B cell (primary cell): ENCODE measurements at regions of chr7 and their contacts with region 1.

Region 1: GRCh38 chr7:139016931-139017511 is 18.8 kb downstream of the ZC3HAV1L start:
- DNase-seq: peak; percentile 66
- ATAC-seq: peak; percentile 78
- H3K4me3 ChIP-seq: no peak overlapping the region
- H3K4me3 Mint-ChIP-seq: no peak overlapping the region
- H3K27ac ChIP-seq: no peak overlapping the region
- H3K27ac Mint-ChIP-seq: no peak overlapping the region
- H3K4me1 ChIP-seq: peaks cover 0 to 3% of the 10 kb centered on the region in 2 donors
- H3K4me1 Mint-ChIP-seq: peaks cover 4% of the 10 kb centered on the region
- H3K27me3 ChIP-seq: peaks cover 0 to 2% (median 0%) of the 10 kb centered on the region in 4 experiments
- H3K27me3 Mint-ChIP-seq: peaks cover 20% of the 10 kb centered on the region
- CTCF ChIP-seq: peak; percentile 66

Region 2: GRCh38 chr7:139004321-139005075 is 12.5 kb before region 1 on chr7:
- CTCF ChIA-PET with region 1: no interaction called
- POLR2A ChIA-PET with region 1: no interaction called
- intact Hi-C with region 1: no loop called
- DNase-seq: peak; percentile 33
- ATAC-seq: no peak
- H3K4me3 ChIP-seq: no peak overlapping the region
- H3K4me3 Mint-ChIP-seq: no peak overlapping the region
- H3K27ac ChIP-seq: no peak overlapping the region
- H3K27ac Mint-ChIP-seq: no peak overlapping the region
- H3K4me1 ChIP-seq: no peaks in the 10 kb centered on the region
- H3K4me1 Mint-ChIP-seq: no peaks in the 10 kb centered on the region
- H3K27me3 ChIP-seq: peaks cover 0 to 4% (median 0%) of the 10 kb centered on the region in 4 experiments
- H3K27me3 Mint-ChIP-seq: peaks cover 9% of the 10 kb centered on the region
- CTCF ChIP-seq: no peak

Region 3: DNA sequence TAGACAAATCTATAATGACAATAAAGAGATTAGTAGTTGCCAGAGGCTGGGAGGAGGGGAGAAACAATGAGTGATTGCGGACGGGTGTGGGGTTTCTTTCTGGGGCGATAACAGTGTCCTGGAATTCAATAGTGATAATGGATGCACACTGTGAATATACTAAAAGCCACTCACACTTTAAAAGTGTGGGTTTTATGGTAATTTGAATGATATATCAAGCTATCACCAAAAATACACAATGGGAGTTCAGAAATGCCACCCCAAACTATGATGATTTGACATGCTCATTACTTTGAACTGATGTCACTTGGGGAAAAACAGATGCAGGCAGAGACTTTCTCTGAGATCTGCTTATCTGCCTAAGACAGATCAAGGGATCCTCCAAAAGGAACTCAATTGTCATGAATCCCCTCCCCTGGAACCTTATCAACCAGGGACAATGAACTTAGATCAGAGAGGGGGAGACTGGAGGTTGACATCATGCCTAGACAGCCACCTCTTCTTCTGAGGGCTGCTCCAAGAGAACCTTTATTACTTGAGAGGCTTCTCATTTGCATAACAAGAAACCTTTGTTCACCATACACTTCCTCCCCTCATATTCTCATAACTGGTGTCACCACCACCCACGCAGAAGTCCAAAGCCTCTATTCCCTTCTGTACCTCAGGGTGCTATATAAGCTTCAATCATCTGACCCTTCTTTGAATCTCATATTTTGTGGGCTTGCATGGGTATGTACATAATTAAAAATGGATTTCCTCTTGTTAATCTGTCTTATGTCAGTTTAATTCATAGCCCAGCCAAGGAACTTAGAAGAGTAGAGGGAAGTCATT is 107.3 kb after region 1 on chr7:
- CTCF ChIA-PET with region 1: interaction called, 85 read pairs
- POLR2A ChIA-PET with region 1: interaction called, 3 read pairs
- intact Hi-C with region 1: no loop called
- DNase-seq: no peak
- ATAC-seq: peak; percentile 31
- H3K4me3 ChIP-seq: no peak overlapping the region
- H3K4me3 Mint-ChIP-seq: no peak overlapping the region
- H3K27ac ChIP-seq: no peak overlapping the region
- H3K27ac Mint-ChIP-seq: no peak overlapping the region
- H3K4me1 ChIP-seq: peaks cover 21 to 28% of the 10 kb centered on the region in 2 donors
- H3K4me1 Mint-ChIP-seq: peaks cover 38% of the 10 kb centered on the region
- H3K27me3 ChIP-seq: no peaks in the 10 kb centered on the region
- H3K27me3 Mint-ChIP-seq: no peaks in the 10 kb centered on the region
- CTCF ChIP-seq: no peak

Region 4: DNA sequence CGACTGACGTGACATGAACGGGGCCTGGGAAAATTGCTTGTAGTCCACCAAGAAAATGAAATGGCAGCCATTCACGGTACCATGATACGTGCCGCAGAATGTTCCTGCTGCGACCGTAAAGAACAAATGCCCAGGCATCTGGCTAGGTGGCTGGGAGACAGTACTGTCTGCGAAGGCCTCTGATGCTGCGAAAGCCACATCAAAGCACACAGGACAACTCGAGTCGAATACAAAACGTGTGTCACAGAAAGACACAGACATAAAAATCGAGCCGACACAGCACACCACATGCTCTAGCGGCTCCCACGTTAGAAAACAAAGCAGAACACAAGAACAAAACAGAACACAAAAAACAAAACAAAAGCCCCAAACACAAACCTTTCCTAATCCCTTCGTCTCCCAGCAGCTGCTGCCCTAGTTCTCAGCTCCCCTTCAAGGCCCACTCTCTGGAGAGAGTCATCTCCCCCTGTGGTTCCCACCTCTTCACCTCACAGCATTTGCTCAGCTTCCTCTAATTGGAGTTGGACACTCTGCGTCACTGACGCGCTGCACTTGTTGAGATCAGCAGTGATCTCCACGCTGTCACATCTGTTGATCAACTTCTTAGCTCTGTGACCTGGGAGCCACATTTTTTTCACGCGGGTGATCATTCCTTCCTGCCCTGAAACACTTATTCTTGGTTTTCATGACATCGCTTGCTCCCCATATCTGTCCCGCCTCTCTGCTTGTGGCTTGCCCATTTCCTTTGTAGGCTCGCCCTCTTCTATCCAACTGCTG is 618.7 kb after region 1 on chr7:
- CTCF ChIA-PET with region 1: no interaction called
- POLR2A ChIA-PET with region 1: no interaction called
- intact Hi-C with region 1: no loop called
- DNase-seq: no peak
- ATAC-seq: no peak
- H3K4me3 ChIP-seq: no peak overlapping the region
- H3K4me3 Mint-ChIP-seq: no peak overlapping the region
- H3K27ac ChIP-seq: no peak overlapping the region
- H3K27ac Mint-ChIP-seq: no peak overlapping the region
- H3K4me1 ChIP-seq: no peaks in the 10 kb centered on the region
- H3K4me1 Mint-ChIP-seq: no peaks in the 10 kb centered on the region
- H3K27me3 ChIP-seq: no peaks in the 10 kb centered on the region
- H3K27me3 Mint-ChIP-seq: no peaks in the 10 kb centered on the region
- CTCF ChIP-seq: no peak